ENCODE measurements at regions of chr13 and their contacts with region 1.

Region 1: GRCh38 chr13:27171827-27172494 is 350 bp upstream of the USP12 start:
- DNase-seq: peak; percentile 88
- H3K4me3 ChIP-seq: peak overlapping the region; percentile 86 to 89
- H3K27ac ChIP-seq: peak overlapping the region; percentile 90 to 95
- H3K4me1 ChIP-seq: peaks cover 6% of the 10 kb centered on the region
- H3K27me3 ChIP-seq: no peaks in the 10 kb centered on the region
- CTCF ChIP-seq: peak in 2 of 4 experiments; percentile 13 to 31
- POLR2A ChIP-seq: peak; percentile 36

Region 2: GRCh38 chr13:26985285-26985878 is 186.6 kb before region 1 on chr13:
- intact Hi-C with region 1: loop called (anchors 5 kb)
- DNase-seq: peak; percentile 81
- H3K4me3 ChIP-seq: no peak overlapping the region
- H3K27ac ChIP-seq: no peak overlapping the region
- H3K4me1 ChIP-seq: peaks cover 4% of the 10 kb centered on the region
- H3K27me3 ChIP-seq: no peaks in the 10 kb centered on the region
- CTCF ChIP-seq: peak; percentile 40 to 85 (median 82)
- POLR2A ChIP-seq: no peak

Region 3: DNA sequence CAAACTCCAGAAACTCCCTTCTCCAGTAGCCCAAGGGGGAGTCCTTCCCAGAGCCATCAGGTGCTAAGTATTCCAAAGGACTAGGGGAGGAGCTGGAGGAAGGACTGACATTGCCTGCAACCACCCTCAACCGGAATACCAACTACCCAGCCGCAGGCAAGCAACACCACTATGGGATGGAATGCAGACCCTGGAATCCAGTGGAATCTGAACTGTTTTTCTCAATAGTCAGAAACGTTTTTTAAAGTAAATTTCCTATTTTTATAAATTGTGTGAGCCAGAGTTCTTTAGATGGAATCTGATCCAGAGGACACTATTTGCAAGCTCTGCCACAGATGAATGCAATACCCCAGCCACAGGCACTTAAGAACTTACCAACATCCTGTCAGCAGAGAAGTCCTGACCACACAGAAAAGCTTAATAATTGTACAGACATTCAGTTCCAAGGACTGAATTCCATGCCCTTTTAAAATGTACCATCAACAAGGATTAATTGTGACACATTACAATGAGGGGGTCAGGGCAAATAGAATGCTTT is 92.5 kb before region 1 on chr13:
- intact Hi-C with region 1: loop called (anchors 5 kb)
- DNase-seq: no peak
- H3K4me3 ChIP-seq: no peak overlapping the region
- H3K27ac ChIP-seq: no peak overlapping the region
- H3K4me1 ChIP-seq: no peaks in the 10 kb centered on the region
- H3K27me3 ChIP-seq: no peaks in the 10 kb centered on the region
- CTCF ChIP-seq: no peak
- POLR2A ChIP-seq: no peak

Region 4: DNA sequence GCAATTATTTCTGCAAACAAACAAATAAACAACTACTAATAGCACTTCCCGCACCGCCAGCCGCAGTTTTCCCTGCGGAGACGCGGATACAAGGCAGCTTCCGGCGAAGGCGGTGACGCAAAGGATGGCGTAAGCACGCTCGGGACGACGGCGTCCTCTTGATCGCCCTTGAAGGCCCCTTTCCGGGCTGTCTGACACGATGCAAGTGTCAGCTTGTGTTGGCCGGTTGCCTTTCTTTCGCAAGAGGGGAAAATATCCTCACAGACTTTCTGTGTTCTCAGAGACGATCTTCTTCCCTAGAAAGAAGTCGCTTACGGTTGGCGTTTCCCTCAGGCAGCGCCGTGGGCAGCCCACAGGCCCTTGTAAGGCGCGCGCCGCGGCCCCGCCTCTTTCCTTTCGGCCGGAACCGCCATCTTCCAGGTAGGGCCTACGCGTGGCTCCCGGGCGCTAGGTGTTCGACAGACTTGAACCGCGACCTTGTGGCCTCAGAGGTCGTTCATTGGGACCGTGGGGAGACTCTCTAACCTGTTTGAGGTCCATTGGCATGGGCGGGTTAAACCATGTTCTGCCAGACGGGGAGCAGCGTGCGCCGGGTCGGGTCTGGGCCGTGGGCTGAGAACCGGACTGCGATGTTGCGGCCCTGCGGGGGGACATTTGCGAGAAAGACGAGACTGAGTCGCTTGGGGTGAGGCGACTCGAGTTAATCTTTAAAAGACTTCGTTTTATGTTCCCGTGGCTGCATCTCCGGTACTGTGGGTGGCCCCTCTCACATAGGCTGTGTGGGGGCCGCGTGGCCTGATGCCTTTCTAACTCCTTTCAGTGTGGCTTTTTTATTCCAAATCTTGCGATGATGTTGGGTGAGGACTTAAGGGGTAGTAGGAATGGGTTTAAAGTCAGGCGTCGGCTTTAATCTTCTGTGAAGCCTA is 79.5 kb after region 1 on chr13 and contains the start of gene RPL21:
- intact Hi-C with region 1: loop called (anchors 5 kb)
- DNase-seq: peak; percentile 93
- H3K4me3 ChIP-seq: peak within 1 kb of the TSS; percentile 79 to 82
- H3K27ac ChIP-seq: peak within 1 kb of the TSS; percentile 93 to 96
- H3K4me1 ChIP-seq: peaks cover 3% of the 10 kb centered on the region
- H3K27me3 ChIP-seq: no peaks in the 10 kb centered on the region
- CTCF ChIP-seq: peak in 1 of 4 experiments; percentile 15
- POLR2A ChIP-seq: peak; percentile 57
- total RNA-seq, gene RPL21: 338 to 1,109 TPM

Region 5: GRCh38 chr13:27270594-27271520 is 98.9 kb after region 1 on chr13 and contains the start of gene RASL11A:
- intact Hi-C with region 1: loop called (anchors 5 kb)
- DNase-seq: peak; percentile 77
- H3K4me3 ChIP-seq: peak within 1 kb of the TSS; percentile 50 to 63
- H3K27ac ChIP-seq: peak within 1 kb of the TSS; percentile 78 to 84
- H3K4me1 ChIP-seq: peaks cover 2% of the 10 kb centered on the region
- H3K27me3 ChIP-seq: no peaks in the 10 kb centered on the region
- CTCF ChIP-seq: peak; percentile 75 to 92 (median 78)
- POLR2A ChIP-seq: peak; percentile 81
- total RNA-seq, gene RASL11A: 26.5 to 31.5 TPM

Region 6: GRCh38 chr13:27362064-27362883 is 190.3 kb after region 1 on chr13:
- intact Hi-C with region 1: loop called (anchors 10 kb)
- DNase-seq: peak; percentile 73
- H3K4me3 ChIP-seq: peak overlapping the region; percentile 16
- H3K27ac ChIP-seq: no peak overlapping the region
- H3K4me1 ChIP-seq: no peaks in the 10 kb centered on the region
- H3K27me3 ChIP-seq: no peaks in the 10 kb centered on the region
- CTCF ChIP-seq: peak; percentile 71 to 91 (median 79)
- POLR2A ChIP-seq: no peak

Measured in prostate gland (tissue), 2 donors.